ENCODE measurements at regions of chr4 and their contacts with region 1.

Region 1: GRCh38 chr4:178453057-178453456 is 1010.8 kb upstream of the AGA start:
- DNase-seq: no peak
- ATAC-seq: no peak
- H3K4me3 ChIP-seq: no peak overlapping the region
- H3K27ac ChIP-seq: no peak overlapping the region
- H3K4me1 ChIP-seq: no peaks in the 10 kb centered on the region
- H3K27me3 ChIP-seq: no peaks in the 10 kb centered on the region
- CTCF ChIP-seq: no peak
- POLR2A ChIP-seq: no peak

Region 2: GRCh38 chr4:178602833-178603232 is 149.8 kb after region 1 on chr4:
- intact Hi-C with region 1: loop called in 1 of 10 experiments (anchors 5 kb)
- DNase-seq: no peak
- ATAC-seq: no peak
- H3K4me3 ChIP-seq: no peak overlapping the region
- H3K27ac ChIP-seq: no peak overlapping the region
- H3K4me1 ChIP-seq: no peaks in the 10 kb centered on the region
- H3K27me3 ChIP-seq: no peaks in the 10 kb centered on the region
- CTCF ChIP-seq: no peak
- POLR2A ChIP-seq: no peak

Measured in heart left ventricle (tissue), 16 donors.